ENCODE measurements at regions of chr17 and their contacts with region 1.

Region 1: DNA sequence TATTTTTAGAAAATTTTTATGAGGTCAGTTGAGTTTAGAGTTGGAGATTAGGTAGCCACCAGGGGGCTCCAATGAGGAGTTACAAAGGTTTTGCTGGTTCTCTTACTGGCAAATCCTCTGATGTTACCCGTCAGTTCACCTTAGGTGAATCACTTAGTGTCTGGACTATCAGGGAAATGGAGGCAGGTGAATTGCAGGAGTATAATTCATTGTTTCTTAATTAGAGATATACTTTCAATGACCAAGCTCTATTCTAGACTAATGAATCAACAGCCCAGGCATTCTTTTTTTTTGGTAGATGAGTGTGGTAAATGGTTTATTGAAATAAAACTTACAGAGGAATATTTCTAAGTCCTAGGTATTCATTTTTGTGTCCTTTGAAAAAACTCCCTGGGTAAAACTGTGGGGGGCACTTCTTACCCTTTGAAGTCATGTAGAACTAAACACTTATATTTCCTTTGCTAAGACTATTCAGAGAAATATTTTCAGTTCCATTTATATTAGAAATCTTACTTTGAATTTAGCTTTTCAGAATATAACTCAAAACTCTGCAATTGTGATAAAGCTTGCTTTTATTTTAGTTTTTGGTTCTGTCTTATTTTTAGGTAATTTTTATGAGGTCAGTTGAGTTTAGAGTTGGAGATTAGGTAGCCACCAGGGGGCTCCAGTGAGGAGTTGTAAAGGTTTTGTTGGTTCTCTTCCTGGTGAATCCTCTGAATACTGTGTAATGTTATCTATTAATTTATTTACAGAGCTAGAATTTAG is 17.7 kb downstream of the PSMD11 start:
- DNase-seq: no peak
- ATAC-seq: peak; percentile 70
- H3K4me3 ChIP-seq: no peak overlapping the region
- H3K27ac ChIP-seq: no peak overlapping the region
- H3K4me1 ChIP-seq: no peaks in the 10 kb centered on the region
- H3K27me3 ChIP-seq: no peaks in the 10 kb centered on the region
- CTCF ChIP-seq: peak; percentile 70

Region 2: DNA sequence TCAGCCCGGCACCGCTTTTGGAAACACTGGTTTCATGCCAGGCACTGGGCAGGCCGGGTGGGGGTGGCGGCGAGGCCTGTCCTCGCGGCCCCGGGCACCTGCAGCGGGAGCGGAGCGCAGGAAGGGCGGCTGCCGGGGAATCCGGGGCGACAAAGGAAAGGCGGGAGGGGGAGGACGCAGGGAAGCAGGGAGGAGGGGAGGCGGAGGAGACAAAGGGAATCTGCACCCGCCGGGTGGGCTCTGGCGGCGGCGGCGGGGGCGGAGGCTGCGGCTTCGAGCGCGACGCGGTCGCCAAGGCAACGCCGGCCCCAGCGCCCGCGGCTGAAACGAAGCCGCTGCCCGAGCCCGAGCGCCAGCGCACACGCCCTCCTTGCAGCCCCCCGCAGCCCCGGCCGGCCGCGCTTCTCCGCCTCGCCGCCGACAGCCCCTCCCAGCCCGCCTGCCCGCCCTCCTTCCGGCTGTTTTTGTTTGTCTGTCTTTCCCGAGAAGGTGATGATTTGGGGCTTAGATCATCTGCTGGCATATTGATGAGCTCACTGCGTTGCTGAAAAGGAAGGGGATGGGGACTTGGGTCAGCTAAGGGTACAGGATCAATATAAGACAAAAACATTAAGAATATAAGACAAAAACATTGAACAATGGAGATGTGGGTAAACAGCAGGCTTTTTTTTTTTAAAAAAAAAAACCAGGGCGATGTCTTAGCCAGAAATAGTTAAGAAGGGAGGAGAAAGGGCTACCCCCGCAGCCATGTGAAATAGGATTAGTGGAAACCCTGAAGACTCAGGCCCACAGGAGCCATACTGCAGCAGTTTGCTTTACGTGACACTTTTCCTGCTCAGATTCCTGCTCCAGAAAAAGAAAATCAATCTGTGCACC is 57.4 kb after region 1 on chr17:
- CTCF ChIA-PET with region 1: no interaction called
- POLR2A ChIA-PET with region 1: interaction called, 13 read pairs
- in situ Hi-C with region 1: no loop called
- intact Hi-C with region 1: no loop called
- DNase-seq: no peak
- ATAC-seq: peak; percentile 82
- H3K4me3 ChIP-seq: peak overlapping the region; percentile 35 to 47
- H3K27ac ChIP-seq: no peak overlapping the region
- H3K4me1 ChIP-seq: peaks cover 8% of the 10 kb centered on the region; the same call in 1 of the 2 replicates
- H3K27me3 ChIP-seq: peaks cover 9% of the 10 kb centered on the region
- CTCF ChIP-seq: no peak